Activated CD4-positive, alpha-beta memory T cell treated with anti-CD3 and anti-CD28 coated beads, Interleukin-2, amount 10 ng/mL, durations not matched to agents 7 days and 5 days (primary cell): ENCODE measurements at regions of chr5 and their contacts with region 1.

Region 1: DNA sequence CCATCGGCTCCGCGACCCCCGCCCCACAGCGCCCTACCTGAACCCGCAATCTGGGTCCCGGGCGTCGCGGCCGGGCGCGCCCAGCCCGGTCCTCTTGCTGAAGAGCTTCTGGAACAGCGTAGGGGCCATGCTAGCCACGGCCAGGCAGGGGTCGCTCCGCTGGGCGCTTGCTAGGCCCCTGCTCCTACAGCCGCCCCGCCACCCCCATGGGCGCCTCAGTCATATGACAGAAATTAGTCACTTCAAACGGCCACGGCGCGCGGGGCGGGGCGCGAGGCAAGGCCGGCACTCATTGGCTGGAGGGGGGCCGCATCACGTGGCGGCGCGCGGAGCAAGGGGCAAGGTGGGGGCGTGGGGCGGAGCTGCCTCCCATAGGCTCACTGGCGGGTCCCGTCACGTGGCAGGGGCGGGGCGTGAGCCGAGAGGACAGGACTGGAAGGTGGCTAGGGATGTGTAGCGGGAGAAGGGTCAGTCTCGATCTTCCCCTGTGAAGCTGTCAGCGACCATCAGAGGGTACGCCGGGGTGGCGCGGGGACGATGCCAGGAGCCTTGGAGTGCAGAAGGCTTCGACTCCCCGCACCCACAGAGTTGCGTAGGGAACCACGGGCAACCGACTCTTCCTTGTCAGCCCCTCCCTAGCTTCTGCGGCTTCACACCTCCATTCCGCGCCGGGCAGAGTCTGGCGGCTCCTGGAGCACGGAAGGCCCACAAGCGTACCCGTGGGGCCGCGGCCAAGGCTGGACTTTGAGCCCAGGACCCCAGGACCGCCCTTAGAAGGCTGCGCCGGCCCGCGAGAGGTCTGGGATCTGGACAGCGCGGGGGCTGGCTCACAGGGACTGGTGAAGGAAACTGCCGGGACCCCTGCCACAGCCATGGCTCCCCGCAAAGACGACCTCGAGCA is at the start of gene FNIP1:
- DNase-seq: peak; percentile 99
- H3K4me3 Mint-ChIP-seq: peak within 1 kb of the TSS; percentile 87
- H3K27ac Mint-ChIP-seq: peak within 1 kb of the TSS; percentile 83
- H3K4me1 Mint-ChIP-seq: peaks cover 27% of the 10 kb centered on the region
- H3K27me3 Mint-ChIP-seq: peaks cover 3% of the 10 kb centered on the region
- total RNA-seq, gene FNIP1: 27.8 to 28.7 TPM

Region 2: GRCh38 chr5:131634996-131635754 is 161.9 kb before region 1 on chr5 and contains the start of gene RAPGEF6:
- CTCF ChIA-PET with region 1: no interaction called
- POLR2A ChIA-PET with region 1: interaction called, 22 read pairs
- DNase-seq: peak; percentile 99
- H3K4me3 Mint-ChIP-seq: peak within 1 kb of the TSS; percentile 99
- H3K27ac Mint-ChIP-seq: peak within 1 kb of the TSS; percentile 99
- H3K4me1 Mint-ChIP-seq: peaks cover 23% of the 10 kb centered on the region
- H3K27me3 Mint-ChIP-seq: no peaks in the 10 kb centered on the region
- total RNA-seq, gene RAPGEF6: 40.7 to 44.5 TPM

Region 3: GRCh38 chr5:131821221-131821620 is 24.2 kb after region 1 on chr5:
- CTCF ChIA-PET with region 1: no interaction called
- POLR2A ChIA-PET with region 1: no interaction called
- DNase-seq: no peak
- H3K4me3 Mint-ChIP-seq: no peak overlapping the region
- H3K27ac Mint-ChIP-seq: no peak overlapping the region
- H3K4me1 Mint-ChIP-seq: peaks cover 2% of the 10 kb centered on the region
- H3K27me3 Mint-ChIP-seq: peaks cover 18% of the 10 kb centered on the region